ENCODE measurements at regions of chr20 and their contacts with region 1.

Region 1: DNA sequence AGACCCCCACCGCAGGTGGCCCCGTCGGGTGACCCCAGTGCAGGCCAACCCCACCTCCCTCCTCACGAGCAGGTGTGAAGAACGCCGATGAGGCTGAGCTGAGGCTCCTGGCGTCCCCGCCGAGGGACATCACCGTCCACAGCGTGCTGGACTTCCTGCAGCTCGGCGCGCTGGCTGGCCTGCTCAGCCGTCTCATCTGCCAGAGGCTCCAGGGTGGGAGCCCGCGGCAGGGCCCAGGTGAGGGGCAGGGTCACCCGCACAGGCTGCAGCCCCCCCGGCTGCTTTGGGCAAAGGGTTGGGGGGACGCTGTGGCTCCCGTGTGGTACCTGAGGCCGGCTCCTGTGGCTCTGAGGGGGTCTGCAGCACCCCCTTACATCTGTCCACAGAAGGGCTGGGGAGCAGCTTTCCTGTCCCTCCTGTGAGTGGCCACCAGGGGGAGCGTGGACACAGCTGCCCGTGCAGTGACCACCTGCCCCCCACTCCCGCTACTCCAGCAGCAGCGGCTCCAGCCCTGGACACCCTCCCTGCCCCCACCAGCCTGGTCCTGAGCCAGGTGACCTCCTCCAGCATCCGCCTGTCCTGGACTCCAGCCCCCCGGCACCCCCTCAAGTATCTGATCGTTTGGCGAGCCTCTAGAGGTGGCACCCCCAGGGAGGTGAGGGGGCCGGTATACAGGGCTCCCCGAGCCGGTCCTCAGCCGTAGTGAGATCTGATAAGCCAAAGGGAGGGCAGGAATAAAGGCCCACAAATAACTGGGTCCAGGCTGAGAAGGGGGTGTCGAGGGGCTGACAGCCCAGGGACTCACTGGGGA is 16.5 kb downstream of the COL20A1 start:
- DNase-seq: peak; percentile 27
- H3K4me3 Mint-ChIP-seq: no peak overlapping the region
- H3K27ac Mint-ChIP-seq: no peak overlapping the region
- H3K4me1 Mint-ChIP-seq: no peaks in the 10 kb centered on the region
- H3K27me3 Mint-ChIP-seq: no peaks in the 10 kb centered on the region
- CTCF ChIP-seq: peak; percentile 86

Region 2: GRCh38 chr20:63333241-63333836 is 23.9 kb after region 1 on chr20:
- CTCF ChIA-PET with region 1: interaction called, 10 read pairs
- POLR2A ChIA-PET with region 1: no interaction called
- intact Hi-C with region 1: no loop called
- DNase-seq: no peak
- H3K4me3 Mint-ChIP-seq: no peak overlapping the region
- H3K27ac Mint-ChIP-seq: no peak overlapping the region
- H3K4me1 Mint-ChIP-seq: no peaks in the 10 kb centered on the region
- H3K27me3 Mint-ChIP-seq: peaks cover 31% of the 10 kb centered on the region
- CTCF ChIP-seq: no peak

Region 3: DNA sequence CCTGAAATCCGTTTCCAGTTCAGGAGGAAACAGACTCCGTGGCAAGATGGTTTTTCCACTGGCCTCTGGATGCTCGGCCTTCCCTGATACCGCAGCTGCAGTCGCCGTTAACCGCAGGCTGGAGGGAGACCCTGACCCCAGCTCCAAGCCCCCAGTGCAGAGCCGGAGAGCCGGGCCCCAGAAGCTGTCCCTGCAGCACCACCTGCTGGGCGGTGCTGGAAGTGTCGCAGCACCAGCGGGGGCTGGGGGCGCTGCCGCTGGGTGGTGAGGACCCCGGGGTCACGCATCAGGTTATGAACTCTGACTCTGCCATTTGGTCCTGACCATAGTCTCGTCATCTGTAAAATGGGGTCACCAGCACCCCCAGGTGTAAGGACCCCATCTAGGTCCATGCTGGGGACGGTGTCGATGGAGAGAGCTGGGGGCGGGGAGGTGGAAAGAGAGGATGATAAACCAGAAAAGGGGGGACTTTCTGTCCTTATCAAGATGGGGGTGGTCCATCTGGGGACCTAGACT is 72.4 kb after region 1 on chr20:
- CTCF ChIA-PET with region 1: interaction called, 85 read pairs
- POLR2A ChIA-PET with region 1: no interaction called
- intact Hi-C with region 1: no loop called
- DNase-seq: peak; percentile 13
- H3K4me3 Mint-ChIP-seq: no peak overlapping the region
- H3K27ac Mint-ChIP-seq: no peak overlapping the region
- H3K4me1 Mint-ChIP-seq: no peaks in the 10 kb centered on the region
- H3K27me3 Mint-ChIP-seq: peaks cover 28% of the 10 kb centered on the region
- CTCF ChIP-seq: peak; percentile 97

Region 4: GRCh38 chr20:63482856-63483695 is 173.6 kb after region 1 on chr20:
- CTCF ChIA-PET with region 1: no interaction called
- POLR2A ChIA-PET with region 1: no interaction called
- intact Hi-C with region 1: loop called (anchors 5 kb)
- DNase-seq: peak; percentile 30
- H3K4me3 Mint-ChIP-seq: no peak overlapping the region
- H3K27ac Mint-ChIP-seq: no peak overlapping the region
- H3K4me1 Mint-ChIP-seq: peaks cover 17% of the 10 kb centered on the region
- H3K27me3 Mint-ChIP-seq: peaks cover 36% of the 10 kb centered on the region
- CTCF ChIP-seq: no peak

Region 5: DNA sequence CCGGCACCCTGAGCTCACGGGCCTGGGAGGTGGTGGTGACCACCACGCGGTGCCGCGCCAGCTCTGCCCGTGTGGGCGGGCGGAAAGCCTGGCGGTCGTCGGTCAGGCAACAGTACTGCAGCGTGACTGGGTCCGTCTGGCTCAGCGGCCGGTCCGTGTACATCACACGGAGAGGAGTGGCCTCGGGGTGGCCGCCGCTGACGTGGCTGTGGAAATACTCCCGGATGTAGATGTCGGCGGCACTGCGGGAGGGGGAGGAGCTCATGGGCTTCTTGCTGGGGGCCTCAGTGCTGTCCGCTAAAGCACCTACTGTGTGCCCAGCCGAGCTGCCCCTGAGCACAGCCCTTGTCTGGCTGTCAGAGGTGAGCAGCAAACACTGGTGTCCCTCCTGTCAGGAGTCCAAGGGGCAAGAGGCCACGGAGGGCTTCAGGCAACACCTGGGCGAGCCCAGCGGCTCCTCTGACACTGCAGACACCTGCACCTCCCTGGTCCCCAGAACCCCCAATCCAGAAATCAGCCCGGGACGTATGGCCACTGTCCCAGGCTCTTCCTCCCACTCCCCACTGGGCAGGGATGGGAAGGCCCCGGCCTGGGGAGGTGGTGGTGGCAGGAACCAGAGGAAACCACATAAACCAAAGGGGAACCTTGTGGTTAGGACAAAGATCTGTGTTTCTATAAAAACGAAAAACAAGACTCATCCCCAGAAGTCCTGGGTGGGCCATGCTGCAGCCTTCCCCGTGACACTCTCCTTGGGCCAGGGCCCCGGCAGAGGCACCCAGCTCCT is 258.1 kb after region 1 on chr20:
- CTCF ChIA-PET with region 1: no interaction called
- POLR2A ChIA-PET with region 1: no interaction called
- intact Hi-C with region 1: no loop called
- DNase-seq: no peak
- H3K4me3 Mint-ChIP-seq: no peak overlapping the region
- H3K27ac Mint-ChIP-seq: no peak overlapping the region
- H3K4me1 Mint-ChIP-seq: no peaks in the 10 kb centered on the region
- H3K27me3 Mint-ChIP-seq: no peaks in the 10 kb centered on the region
- CTCF ChIP-seq: no peak